Transverse colon (tissue), 4 donors: ENCODE measurements at regions of chr17 and their contacts with region 1.

Region 1: GRCh38 chr17:54919425-54919824 is 18.8 kb downstream of the TOM1L1 start:
- DNase-seq: no peak
- H3K4me3 ChIP-seq: no peak overlapping the region
- H3K27ac ChIP-seq: no peak overlapping the region
- H3K4me1 ChIP-seq: no peaks in the 10 kb centered on the region
- H3K27me3 ChIP-seq: no peaks in the 10 kb centered on the region
- CTCF ChIP-seq: no peak
- EP300 ChIP-seq: no peak
- POLR2A ChIP-seq: no peak

Region 2: GRCh38 chr17:54944796-54945195 is 25.4 kb after region 1 on chr17:
- in situ Hi-C with region 1: no loop called
- intact Hi-C with region 1: loop called (anchors 1 kb)
- DNase-seq: no peak
- H3K4me3 ChIP-seq: no peak overlapping the region
- H3K27ac ChIP-seq: no peak overlapping the region
- H3K4me1 ChIP-seq: no peaks in the 10 kb centered on the region
- H3K27me3 ChIP-seq: no peaks in the 10 kb centered on the region
- CTCF ChIP-seq: no peak
- EP300 ChIP-seq: no peak
- POLR2A ChIP-seq: no peak